Activated CD4-positive, alpha-beta memory T cell treated with anti-CD3 and anti-CD28 coated beads for 36 hours (primary cell): ENCODE measurements at regions of chr12 and their contacts with region 1.

Region 1: GRCh38 chr12:30795410-30796312 is 40.9 kb upstream of the CAPRIN2 start:
- DNase-seq: peak; percentile 86
- H3K4me3 Mint-ChIP-seq: peak overlapping the region; percentile 74
- H3K27ac Mint-ChIP-seq: peak overlapping the region; percentile 66
- H3K4me1 Mint-ChIP-seq: peaks cover 16% of the 10 kb centered on the region
- H3K27me3 Mint-ChIP-seq: peaks cover 38% of the 10 kb centered on the region

Region 2: GRCh38 chr12:30695199-30696103 is 100.2 kb before region 1 on chr12 and contains the start of gene IPO8:
- CTCF ChIA-PET with region 1: no interaction called
- POLR2A ChIA-PET with region 1: no interaction called
- intact Hi-C with region 1: loop called (anchors 2 kb)
- DNase-seq: peak; percentile 90
- H3K4me3 Mint-ChIP-seq: peak within 1 kb of the TSS; percentile 88
- H3K27ac Mint-ChIP-seq: peak within 1 kb of the TSS; percentile 84
- H3K4me1 Mint-ChIP-seq: peaks cover 32% of the 10 kb centered on the region
- H3K27me3 Mint-ChIP-seq: no peaks in the 10 kb centered on the region
- total RNA-seq, gene IPO8: 39.2 to 41.3 TPM

Region 3: DNA sequence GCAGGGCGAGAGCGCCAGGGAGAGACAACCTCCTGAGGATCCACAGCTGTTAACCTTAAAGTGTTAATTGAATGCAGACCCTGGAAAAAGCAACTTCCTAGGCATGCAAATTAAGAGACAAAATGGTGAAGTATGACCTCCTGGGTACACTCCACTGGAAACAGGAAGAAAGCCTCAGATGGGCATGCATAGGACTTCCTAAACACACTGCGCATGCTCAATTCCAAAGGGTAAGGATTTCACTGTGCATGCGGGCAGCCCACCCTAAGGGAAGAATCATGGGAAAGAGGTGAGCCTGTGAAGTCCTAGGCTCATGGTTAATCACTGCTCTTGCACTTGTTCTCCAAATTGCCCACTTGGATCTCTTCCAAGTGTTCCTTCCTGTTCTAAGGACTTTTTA is 39.6 kb after region 1 on chr12:
- CTCF ChIA-PET with region 1: no interaction called
- POLR2A ChIA-PET with region 1: no interaction called
- intact Hi-C with region 1: no loop called
- DNase-seq: no peak
- H3K4me3 Mint-ChIP-seq: no peak overlapping the region
- H3K27ac Mint-ChIP-seq: no peak overlapping the region
- H3K4me1 Mint-ChIP-seq: no peaks in the 10 kb centered on the region
- H3K27me3 Mint-ChIP-seq: peaks cover 11% of the 10 kb centered on the region